ENCODE measurements at regions of chr6 and their contacts with region 1.

Region 1: DNA sequence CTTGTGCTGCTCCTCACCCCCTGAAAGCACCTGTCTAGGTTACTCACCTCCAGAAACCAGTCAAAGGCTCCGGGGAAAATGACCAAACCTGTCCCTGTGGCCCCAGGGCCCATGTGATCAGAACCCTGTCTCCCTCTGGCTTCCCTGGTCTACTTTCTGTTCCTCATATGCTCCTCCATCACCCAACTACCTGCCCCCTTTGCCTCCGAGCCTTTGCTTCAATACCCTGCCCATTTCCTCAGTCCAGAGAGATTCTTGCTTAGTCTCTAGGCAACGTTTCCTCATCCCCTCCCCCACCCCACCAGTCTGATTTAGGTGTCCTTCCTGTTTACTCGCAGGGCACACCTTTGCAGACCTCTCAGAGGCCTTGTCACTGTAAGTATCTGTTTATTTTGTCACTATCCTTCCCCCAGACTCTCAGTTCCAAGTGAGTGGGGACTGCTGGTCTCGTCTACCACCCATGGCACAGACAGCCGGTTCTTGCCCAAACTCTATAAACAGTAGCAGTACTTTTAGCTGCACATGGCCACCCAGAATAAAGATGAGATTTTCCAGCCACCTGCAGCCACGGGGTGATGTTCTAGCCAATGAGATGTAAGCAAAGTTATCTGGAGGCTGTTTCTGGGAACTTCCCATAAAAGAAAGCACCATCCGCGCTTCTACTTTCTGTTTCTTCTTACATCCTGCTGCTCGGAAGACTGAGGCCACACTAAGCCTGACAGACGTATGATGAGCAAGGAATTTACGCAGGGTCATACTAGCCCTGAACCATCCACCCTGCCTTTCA is 13.3 kb downstream of the ELOVL5 start:
- DNase-seq: peak; percentile 47 to 87 (median 75)
- ATAC-seq: peak; percentile 85
- H3K4me3 ChIP-seq: peak overlapping the region; percentile 50
- H3K4me3 Mint-ChIP-seq: peak overlapping the region; percentile 83 to 95 (median 88)
- H3K27ac ChIP-seq: peak overlapping the region; percentile 88
- H3K27ac Mint-ChIP-seq: peak overlapping the region; percentile 98 to 100 (median 99)
- H3K4me1 ChIP-seq: peaks cover 72 to 74% of the 10 kb centered on the region in 2 donors
- H3K4me1 Mint-ChIP-seq: peaks cover 54 to 95% (median 92%) of the 10 kb centered on the region in 7 donors
- H3K27me3 ChIP-seq: no peaks in the 10 kb centered on the region
- H3K27me3 Mint-ChIP-seq: no peaks in the 10 kb centered on the region

Region 2: DNA sequence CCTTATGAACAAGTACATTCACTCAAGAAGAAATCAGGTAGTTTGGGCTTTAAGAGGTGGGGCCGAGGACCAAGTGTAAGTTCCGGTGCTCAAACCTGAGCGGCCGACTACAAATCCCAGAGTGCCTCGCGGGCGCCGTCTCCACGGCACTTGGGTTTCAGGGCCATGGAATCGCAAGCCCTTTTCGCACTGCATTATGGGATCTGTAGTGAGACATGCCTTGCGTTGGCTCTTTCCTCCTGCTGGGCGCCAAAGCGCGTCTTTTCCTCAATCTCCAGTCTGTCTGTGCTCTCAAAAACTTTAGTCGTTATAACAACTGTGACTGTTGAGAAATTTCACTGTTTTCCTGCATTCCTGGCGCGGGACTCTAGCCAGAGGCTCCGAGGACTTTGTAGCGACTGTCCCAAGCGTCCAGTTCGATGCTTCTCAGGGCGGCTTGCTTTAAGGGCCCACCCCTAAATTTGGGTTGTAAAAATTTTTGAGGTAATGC is 270.6 kb before region 1 on chr6:
- CTCF ChIA-PET with region 1: no interaction called
- POLR2A ChIA-PET with region 1: interaction called, 3 read pairs
- intact Hi-C with region 1: loop called in 1 of 2 experiments (anchors 2 kb)
- DNase-seq: peak; percentile 81 to 98 (median 94)
- ATAC-seq: peak; percentile 91
- H3K4me3 ChIP-seq: peak overlapping the region; percentile 95
- H3K4me3 Mint-ChIP-seq: peak overlapping the region; percentile 86 to 100 (median 99)
- H3K27ac ChIP-seq: peak overlapping the region; percentile 78
- H3K27ac Mint-ChIP-seq: peak overlapping the region; percentile 90 to 99 (median 97)
- H3K4me1 ChIP-seq: peaks cover 22% of the 10 kb centered on the region in 2 donors
- H3K4me1 Mint-ChIP-seq: peaks cover 36 to 68% (median 56%) of the 10 kb centered on the region in 7 donors
- H3K27me3 ChIP-seq: no peaks in the 10 kb centered on the region
- H3K27me3 Mint-ChIP-seq: no peaks in the 10 kb centered on the region

Region 3: GRCh38 chr6:53189554-53189953 is 145.8 kb before region 1 on chr6:
- CTCF ChIA-PET with region 1: no interaction called
- POLR2A ChIA-PET with region 1: no interaction called
- intact Hi-C with region 1: loop called in 1 of 2 experiments (anchors 2 kb)
- DNase-seq: no peak
- ATAC-seq: no peak
- H3K4me3 ChIP-seq: no peak overlapping the region
- H3K4me3 Mint-ChIP-seq: no peak overlapping the region
- H3K27ac ChIP-seq: no peak overlapping the region
- H3K27ac Mint-ChIP-seq: no peak overlapping the region
- H3K4me1 ChIP-seq: peaks cover 12 to 26% of the 10 kb centered on the region in 2 donors
- H3K4me1 Mint-ChIP-seq: peaks cover 8 to 39% (median 29%) of the 10 kb centered on the region in 7 donors
- H3K27me3 ChIP-seq: no peaks in the 10 kb centered on the region
- H3K27me3 Mint-ChIP-seq: peaks cover 0 to 2% (median 0%) of the 10 kb centered on the region in 5 donors

Region 4: DNA sequence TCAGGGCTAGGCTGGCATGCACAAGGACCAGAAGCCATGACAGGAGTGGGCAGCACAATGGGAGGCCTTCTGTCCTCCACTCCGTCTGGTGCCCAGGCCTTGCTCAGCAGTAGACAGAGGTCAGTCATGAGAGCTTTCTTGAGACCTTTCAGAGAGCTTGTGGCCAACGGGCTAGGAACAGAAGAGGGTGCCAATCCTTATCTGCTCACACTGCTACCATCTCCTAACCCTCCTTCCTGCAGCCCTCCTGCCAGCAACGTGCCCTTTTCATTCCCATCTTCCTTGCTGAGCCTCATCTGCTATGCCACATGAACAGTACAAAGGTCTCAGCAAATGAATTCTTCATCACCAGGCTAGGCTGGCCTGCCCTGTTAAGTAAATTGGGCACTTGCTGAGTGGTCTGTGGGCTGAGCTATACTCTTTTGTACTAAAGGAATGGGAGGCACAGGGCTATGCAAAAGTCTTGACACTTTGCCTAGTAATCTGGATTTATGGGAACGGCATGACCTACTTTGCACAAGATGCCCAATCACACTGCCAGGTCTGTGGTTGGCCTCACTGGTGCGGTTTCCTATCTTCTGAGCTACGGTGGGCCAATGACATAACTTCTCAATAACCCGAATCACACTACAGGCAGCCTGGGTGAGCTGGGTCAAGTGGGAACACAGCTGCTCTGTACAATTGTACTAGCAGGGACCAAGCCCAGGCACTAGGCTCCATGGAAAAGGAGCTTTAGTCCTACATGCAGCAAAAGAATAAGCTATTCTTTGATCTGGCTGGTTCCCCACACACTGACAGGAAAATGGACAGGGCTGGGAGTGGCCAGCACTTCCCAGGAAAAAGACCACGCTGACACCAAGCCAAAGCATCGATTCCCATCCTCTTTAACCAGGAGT is 34.5 kb before region 1 on chr6:
- CTCF ChIA-PET with region 1: no interaction called
- POLR2A ChIA-PET with region 1: interaction called, 14 read pairs
- intact Hi-C with region 1: loop called (anchors 1 kb)
- DNase-seq: no peak
- ATAC-seq: peak; percentile 48
- H3K4me3 ChIP-seq: no peak overlapping the region
- H3K4me3 Mint-ChIP-seq: peak overlapping the region; percentile 5 to 74 (median 50)
- H3K27ac ChIP-seq: no peak overlapping the region
- H3K27ac Mint-ChIP-seq: peak overlapping the region; percentile 33 to 92 (median 68)
- H3K4me1 ChIP-seq: peaks cover 35 to 52% of the 10 kb centered on the region in 2 donors
- H3K4me1 Mint-ChIP-seq: peaks cover 53 to 84% (median 78%) of the 10 kb centered on the region in 7 donors
- H3K27me3 ChIP-seq: no peaks in the 10 kb centered on the region
- H3K27me3 Mint-ChIP-seq: no peaks in the 10 kb centered on the region

Region 5: GRCh38 chr6:53309059-53309900 is 26.1 kb before region 1 on chr6:
- CTCF ChIA-PET with region 1: interaction called, 3 read pairs
- POLR2A ChIA-PET with region 1: interaction called, 4 read pairs
- intact Hi-C with region 1: loop called (anchors 1 to 2 kb)
- DNase-seq: peak in 1 of 9 donors; percentile 23
- ATAC-seq: peak; percentile 56
- H3K4me3 ChIP-seq: no peak overlapping the region
- H3K4me3 Mint-ChIP-seq: peak overlapping the region in 6 of 10 donors; percentile 3 to 46 (median 18)
- H3K27ac ChIP-seq: no peak overlapping the region
- H3K27ac Mint-ChIP-seq: peak overlapping the region in 8 of 9 donors; percentile 45 to 76 (median 62)
- H3K4me1 ChIP-seq: peaks cover 40 to 77% of the 10 kb centered on the region in 2 donors
- H3K4me1 Mint-ChIP-seq: peaks cover 49 to 85% (median 80%) of the 10 kb centered on the region in 7 donors
- H3K27me3 ChIP-seq: no peaks in the 10 kb centered on the region
- H3K27me3 Mint-ChIP-seq: no peaks in the 10 kb centered on the region

Region 6: DNA sequence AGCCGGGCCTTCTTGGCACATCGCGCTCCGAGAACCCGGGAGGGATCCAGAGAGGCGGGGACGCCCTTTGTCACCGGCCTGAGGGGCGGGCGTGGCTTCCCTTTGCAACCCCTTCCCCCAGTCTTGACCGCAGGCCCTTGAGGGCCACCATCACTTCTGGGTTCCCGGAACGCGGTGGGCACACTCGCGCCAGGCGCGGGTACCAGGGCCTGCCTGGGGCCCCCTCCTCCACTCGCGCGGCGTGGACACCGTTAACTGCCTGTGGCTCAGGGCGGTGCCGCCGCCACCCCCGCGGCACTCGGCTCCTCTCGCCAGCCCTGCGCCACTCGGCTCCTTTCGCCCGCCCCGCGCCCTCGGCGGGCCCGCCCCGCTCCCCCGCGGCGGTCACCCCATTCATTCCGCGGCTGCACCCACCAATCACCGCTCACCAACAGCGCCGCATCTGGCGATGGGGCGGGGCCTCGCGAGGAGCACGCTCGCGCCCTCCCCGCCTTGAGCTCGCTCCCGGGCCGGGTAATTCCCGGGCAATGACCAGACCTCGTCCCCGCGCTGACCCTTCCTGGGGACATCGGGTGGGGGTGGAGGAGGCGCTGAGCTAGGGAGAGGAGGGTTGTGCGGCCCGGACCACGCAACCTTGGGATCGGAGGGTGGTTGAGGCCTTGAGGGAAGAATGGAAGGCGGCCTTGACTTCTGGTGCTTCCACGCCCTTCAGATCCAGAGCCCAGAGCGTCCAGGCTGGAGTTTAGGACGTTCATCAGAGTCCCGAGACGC is 23.9 kb after region 1 on chr6:
- CTCF ChIA-PET with region 1: interaction called, 4 read pairs
- POLR2A ChIA-PET with region 1: interaction called, 13 read pairs
- intact Hi-C with region 1: loop called (anchors 1 kb)
- DNase-seq: peak; percentile 79 to 96 (median 89)
- ATAC-seq: peak; percentile 91
- H3K4me3 ChIP-seq: peak overlapping the region; percentile 76
- H3K4me3 Mint-ChIP-seq: peak overlapping the region; percentile 78 to 94 (median 90)
- H3K27ac ChIP-seq: peak overlapping the region; percentile 88
- H3K27ac Mint-ChIP-seq: peak overlapping the region; percentile 87 to 99 (median 98)
- H3K4me1 ChIP-seq: peaks cover 33 to 41% of the 10 kb centered on the region in 2 donors
- H3K4me1 Mint-ChIP-seq: peaks cover 24 to 54% (median 43%) of the 10 kb centered on the region in 7 donors
- H3K27me3 ChIP-seq: no peaks in the 10 kb centered on the region
- H3K27me3 Mint-ChIP-seq: peaks cover 0 to 4% (median 0%) of the 10 kb centered on the region in 5 donors

Region 7: GRCh38 chr6:53410508-53411258 is 75.3 kb after region 1 on chr6:
- CTCF ChIA-PET with region 1: no interaction called
- POLR2A ChIA-PET with region 1: no interaction called
- intact Hi-C with region 1: loop called in 1 of 2 experiments (anchors 5 kb)
- DNase-seq: peak; percentile 21 to 72 (median 63)
- ATAC-seq: peak; percentile 98
- H3K4me3 ChIP-seq: no peak overlapping the region
- H3K4me3 Mint-ChIP-seq: no peak overlapping the region
- H3K27ac ChIP-seq: no peak overlapping the region
- H3K27ac Mint-ChIP-seq: peak overlapping the region in 1 of 9 donors; percentile 22
- H3K4me1 ChIP-seq: peaks cover 0 to 3% of the 10 kb centered on the region in 2 donors
- H3K4me1 Mint-ChIP-seq: peaks cover 0 to 6% (median 3%) of the 10 kb centered on the region in 7 donors
- H3K27me3 ChIP-seq: no peaks in the 10 kb centered on the region
- H3K27me3 Mint-ChIP-seq: peaks cover 0 to 5% (median 0%) of the 10 kb centered on the region in 5 donors

Region 8: GRCh38 chr6:53556986-53557715 is 221.8 kb after region 1 on chr6:
- CTCF ChIA-PET with region 1: no interaction called
- POLR2A ChIA-PET with region 1: no interaction called
- intact Hi-C with region 1: no loop called
- DNase-seq: no peak
- ATAC-seq: no peak
- H3K4me3 ChIP-seq: no peak overlapping the region
- H3K4me3 Mint-ChIP-seq: no peak overlapping the region
- H3K27ac ChIP-seq: no peak overlapping the region
- H3K27ac Mint-ChIP-seq: no peak overlapping the region
- H3K4me1 ChIP-seq: no peaks in the 10 kb centered on the region
- H3K4me1 Mint-ChIP-seq: no peaks in the 10 kb centered on the region
- H3K27me3 ChIP-seq: no peaks in the 10 kb centered on the region
- H3K27me3 Mint-ChIP-seq: peaks cover 0 to 6% (median 4%) of the 10 kb centered on the region in 5 donors